ENCODE measurements at regions of chr5 and their contacts with region 1.

Region 1: GRCh38 chr5:141968914-141969608 is at the start of gene RNF14:
- DNase-seq: peak; percentile 73
- H3K4me3 ChIP-seq: peak within 1 kb of the TSS; percentile 70
- H3K27ac ChIP-seq: peak within 1 kb of the TSS; percentile 94
- H3K27me3 ChIP-seq: no peaks in the 10 kb centered on the region
- CTCF ChIP-seq: peak; percentile 63
- polyA plus RNA-seq, gene RNF14: 38.1 and 39.0 TPM in 2 replicates

Region 2: GRCh38 chr5:141986072-141986471 is 17.0 kb after region 1 on chr5:
- CTCF ChIA-PET with region 1: interaction called, 15 read pairs
- POLR2A ChIA-PET with region 1: no interaction called
- DNase-seq: no peak
- H3K4me3 ChIP-seq: no peak overlapping the region
- H3K27ac ChIP-seq: no peak overlapping the region
- H3K27me3 ChIP-seq: no peaks in the 10 kb centered on the region
- CTCF ChIP-seq: no peak